PC-9 (cell line): ENCODE measurements at regions of chr7 and their contacts with region 1.

Region 1: DNA sequence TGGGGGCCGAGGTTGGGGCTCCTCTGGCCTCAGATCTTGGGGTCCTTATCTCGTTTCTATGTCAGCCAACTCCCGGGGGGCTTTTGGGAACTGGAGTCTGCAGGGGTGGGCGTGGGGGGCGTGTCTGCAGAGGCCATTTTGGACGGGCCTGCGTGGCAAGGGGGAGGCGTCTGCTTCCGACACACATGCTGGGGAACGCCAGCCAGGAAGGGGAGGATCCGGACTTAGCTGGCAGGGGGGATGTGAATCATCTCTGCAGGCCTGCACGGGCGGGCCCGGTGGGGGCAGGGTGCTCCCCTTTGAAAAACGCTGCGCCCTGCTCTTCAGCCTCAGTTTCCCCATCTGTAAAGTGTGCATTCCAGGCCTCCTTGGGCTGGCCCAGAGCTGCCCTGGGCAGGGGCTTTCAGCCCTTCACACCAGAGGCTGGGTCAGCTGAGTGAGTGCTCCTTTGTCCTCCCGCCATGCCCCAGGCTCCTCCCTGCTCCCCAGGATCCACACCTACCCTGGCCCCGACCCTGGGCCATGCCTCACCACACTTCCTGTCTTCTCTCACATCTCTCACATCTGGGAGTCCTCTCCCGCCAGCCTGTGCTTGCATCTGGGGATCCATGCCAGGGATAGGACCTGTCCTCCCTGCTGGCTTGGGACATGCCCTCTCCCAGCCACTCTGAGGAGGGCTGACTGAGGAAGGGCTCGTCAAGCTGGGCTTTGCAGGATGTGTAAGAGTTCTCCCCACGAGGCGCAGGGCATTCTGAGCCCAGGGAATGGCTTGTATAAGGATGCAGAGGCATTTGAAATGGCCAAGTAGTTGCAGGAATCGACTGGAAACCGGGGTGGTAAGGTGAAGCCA is 172.6 kb upstream of the TNRC18 start:
- DNase-seq: peak; percentile 83 to 86
- H3K4me3 ChIP-seq: peak overlapping the region; percentile 80
- H3K27ac ChIP-seq: peak overlapping the region; percentile 60
- H3K4me1 ChIP-seq: peaks cover 53% of the 10 kb centered on the region
- H3K27me3 ChIP-seq: no peaks in the 10 kb centered on the region
- CTCF ChIP-seq: no peak

Region 2: DNA sequence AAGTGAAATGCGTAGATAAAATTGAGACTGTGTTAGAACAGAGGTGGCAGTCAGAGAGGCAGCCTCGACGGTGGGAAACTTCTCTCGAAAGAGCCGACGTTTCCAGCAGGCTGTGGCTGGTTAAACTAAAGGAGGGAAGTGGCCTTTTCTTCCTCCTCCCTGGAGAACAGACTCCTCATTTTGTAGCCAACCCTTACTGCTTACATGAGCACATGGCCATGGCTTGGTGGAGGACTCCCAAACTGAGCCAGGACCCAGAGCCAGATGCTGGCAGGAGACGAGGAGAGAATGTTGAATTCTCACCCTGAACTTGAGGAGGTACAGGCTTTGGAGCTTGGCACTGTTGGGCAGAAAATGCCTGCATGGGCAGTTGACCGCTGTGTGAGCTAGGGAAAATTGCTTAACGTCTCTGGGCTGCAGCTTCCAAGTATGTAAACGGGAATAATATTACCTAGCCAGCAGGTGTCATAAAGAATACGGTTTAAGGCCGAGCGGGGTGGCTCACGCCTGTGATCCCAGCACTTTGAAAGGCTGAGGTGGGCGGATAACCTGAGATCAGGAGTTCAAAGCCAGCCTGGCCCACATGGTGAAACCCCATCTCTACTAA is 661.7 kb before region 1 on chr7:
- CTCF ChIA-PET with region 1: interaction called, 10 read pairs
- POLR2A ChIA-PET with region 1: no interaction called
- intact Hi-C with region 1: no loop called
- DNase-seq: no peak
- H3K4me3 ChIP-seq: no peak overlapping the region
- H3K27ac ChIP-seq: no peak overlapping the region
- H3K4me1 ChIP-seq: no peaks in the 10 kb centered on the region
- H3K27me3 ChIP-seq: peaks cover 44% of the 10 kb centered on the region
- CTCF ChIP-seq: no peak

Region 3: DNA sequence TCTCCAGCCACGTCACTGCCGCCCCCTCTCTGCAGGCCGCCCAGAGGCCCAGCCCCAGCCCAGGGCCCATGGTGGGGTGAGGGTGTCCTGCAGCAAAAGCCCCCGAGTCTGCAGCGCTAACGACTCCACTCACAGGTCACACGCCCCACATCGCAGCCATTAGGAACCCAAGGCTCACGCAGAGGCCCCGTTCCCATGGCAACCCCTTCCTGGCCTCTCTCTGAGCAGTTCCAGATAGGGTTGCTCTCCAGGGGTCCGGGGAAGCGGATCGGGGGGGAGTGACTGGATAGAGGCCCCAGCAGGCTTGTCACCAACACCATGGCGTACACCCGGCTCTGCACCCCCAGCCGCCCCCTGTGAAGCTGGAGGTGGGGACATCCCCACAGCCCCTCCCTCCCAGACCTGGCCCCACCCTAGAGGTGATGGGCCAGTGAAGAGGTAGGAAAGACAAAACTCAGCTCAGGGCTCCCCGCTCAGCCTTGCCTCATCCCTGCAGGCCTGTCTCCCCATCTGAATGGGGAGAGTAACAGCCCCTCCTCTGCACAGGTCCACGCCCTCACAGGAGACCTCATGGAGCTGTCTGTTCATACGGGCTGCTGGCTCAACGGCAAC is 213.9 kb before region 1 on chr7:
- CTCF ChIA-PET with region 1: no interaction called
- POLR2A ChIA-PET with region 1: no interaction called
- intact Hi-C with region 1: no loop called
- DNase-seq: no peak
- H3K4me3 ChIP-seq: no peak overlapping the region
- H3K27ac ChIP-seq: no peak overlapping the region
- H3K4me1 ChIP-seq: no peaks in the 10 kb centered on the region
- H3K27me3 ChIP-seq: no peaks in the 10 kb centered on the region
- CTCF ChIP-seq: no peak

Region 4: GRCh38 chr7:5574770-5575269 is 21.5 kb before region 1 on chr7:
- CTCF ChIA-PET with region 1: interaction called, 16 read pairs
- POLR2A ChIA-PET with region 1: interaction called, 14 read pairs
- intact Hi-C with region 1: loop called (anchors 1 kb)
- DNase-seq: peak in 1 of 2 experiments; percentile 65
- H3K4me3 ChIP-seq: peak overlapping the region; percentile 41; the same call in 1 of the 2 replicates
- H3K27ac ChIP-seq: peak overlapping the region; percentile 75
- H3K4me1 ChIP-seq: peaks cover 34% of the 10 kb centered on the region
- H3K27me3 ChIP-seq: no peaks in the 10 kb centered on the region
- CTCF ChIP-seq: no peak

Region 5: DNA sequence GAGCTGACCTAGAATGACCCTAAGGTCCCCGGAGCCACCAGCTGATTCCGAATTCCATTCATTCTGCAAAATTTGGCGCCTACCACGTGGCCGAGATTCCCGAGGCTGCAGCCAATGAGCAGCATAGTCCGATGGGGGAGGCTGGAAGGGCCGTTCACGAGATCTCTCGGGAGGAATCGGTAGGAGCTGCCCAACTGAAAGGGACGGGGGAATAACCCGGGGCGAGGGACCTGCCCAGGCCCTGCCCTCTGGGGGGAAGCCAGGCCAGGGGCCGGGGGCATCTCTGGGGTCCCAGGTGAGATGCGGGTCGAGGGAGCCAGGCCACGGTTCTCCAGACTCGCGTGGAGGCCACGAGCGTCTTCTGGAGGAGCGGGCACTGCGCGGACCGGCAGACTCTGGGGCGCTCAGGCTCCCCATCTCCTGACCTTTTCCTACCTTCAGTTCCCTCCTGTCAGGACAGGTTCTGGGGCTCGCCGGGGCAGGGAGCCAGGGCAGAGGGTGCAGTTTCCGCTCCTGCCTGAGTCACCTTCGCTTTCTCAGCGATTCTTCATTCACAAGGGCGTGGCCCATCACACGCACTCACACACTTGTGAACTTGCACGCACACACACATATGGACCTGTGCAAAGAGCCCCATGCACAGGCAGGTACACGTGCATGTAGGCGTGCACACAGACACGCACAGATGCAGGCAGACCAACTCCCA is 11.8 kb after region 1 on chr7:
- CTCF ChIA-PET with region 1: no interaction called
- POLR2A ChIA-PET with region 1: interaction called, 17 read pairs
- intact Hi-C with region 1: no loop called
- DNase-seq: no peak
- H3K4me3 ChIP-seq: no peak overlapping the region
- H3K27ac ChIP-seq: no peak overlapping the region
- H3K4me1 ChIP-seq: no peaks in the 10 kb centered on the region
- H3K27me3 ChIP-seq: no peaks in the 10 kb centered on the region
- CTCF ChIP-seq: no peak

Region 6: DNA sequence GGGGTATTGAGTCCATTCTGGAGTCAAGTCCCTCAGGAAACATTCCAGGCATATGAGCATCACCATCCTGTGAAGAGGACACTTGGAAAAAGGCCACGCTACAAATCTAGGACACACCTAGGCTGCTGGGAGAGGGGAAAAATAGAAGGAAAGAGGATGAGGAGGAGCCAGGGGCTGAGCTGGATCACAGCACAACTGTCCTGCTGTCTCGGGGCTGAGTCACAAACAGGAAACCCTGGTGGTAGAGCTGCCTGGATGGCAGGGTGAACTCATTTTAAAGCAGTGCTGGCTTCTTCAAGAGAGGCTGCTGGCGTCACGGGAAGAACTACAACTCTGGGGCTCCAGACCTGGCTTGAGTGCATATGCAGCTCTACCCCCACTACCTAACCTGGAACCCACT is 33.7 kb after region 1 on chr7:
- CTCF ChIA-PET with region 1: no interaction called
- POLR2A ChIA-PET with region 1: interaction called, 6 read pairs
- intact Hi-C with region 1: loop called (anchors 2 kb)
- DNase-seq: peak; percentile 52 to 72
- H3K4me3 ChIP-seq: no peak overlapping the region
- H3K27ac ChIP-seq: peak overlapping the region; percentile 37; the same call in 1 of the 2 replicates
- H3K4me1 ChIP-seq: peaks cover 13% of the 10 kb centered on the region
- H3K27me3 ChIP-seq: no peaks in the 10 kb centered on the region
- CTCF ChIP-seq: no peak

Region 7: DNA sequence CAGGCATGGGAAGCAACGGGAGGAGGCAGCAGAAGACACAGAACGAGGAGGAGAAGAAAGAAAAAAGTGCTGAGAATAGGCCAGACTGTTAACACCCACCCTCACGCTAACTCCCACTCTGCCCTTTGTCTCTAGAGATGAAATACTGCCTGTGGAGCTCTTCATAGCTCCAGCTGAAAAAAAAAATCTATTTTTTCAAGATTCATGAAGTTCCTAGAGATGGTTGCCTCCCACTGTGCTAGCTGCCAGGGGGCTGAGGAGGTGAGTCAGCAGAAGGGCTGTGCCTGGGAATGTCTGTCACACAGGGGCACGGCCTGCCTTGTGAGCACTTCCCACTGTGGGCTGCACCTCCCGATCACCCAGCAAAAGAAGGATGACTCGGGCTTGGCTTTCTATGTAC is 40.6 kb after region 1 on chr7:
- CTCF ChIA-PET with region 1: no interaction called
- POLR2A ChIA-PET with region 1: interaction called, 25 read pairs
- intact Hi-C with region 1: loop called (anchors 1 kb)
- DNase-seq: peak; percentile 68 to 82
- H3K4me3 ChIP-seq: no peak overlapping the region
- H3K27ac ChIP-seq: 0 out of 2 replicates have a peak overlapping the region, but pooled peaks have one; percentile 5
- H3K4me1 ChIP-seq: peaks cover 29% of the 10 kb centered on the region
- H3K27me3 ChIP-seq: no peaks in the 10 kb centered on the region
- CTCF ChIP-seq: no peak